Endothelial cell of umbilical vein (primary cell): ENCODE measurements at regions of chrX and their contacts with region 1.

Region 1: GRCh38 chrX:132092439-132093065 is 35.3 kb downstream of the FRMD7 start:
- DNase-seq: peak; percentile 68
- H3K4me3 ChIP-seq: no peak overlapping the region
- H3K27ac ChIP-seq: no peak overlapping the region
- H3K4me1 ChIP-seq: no peaks in the 10 kb centered on the region
- H3K27me3 ChIP-seq: no peaks in the 10 kb centered on the region
- CTCF ChIP-seq: peak; percentile 38 to 60
- POLR2A ChIP-seq: no peak

Region 2: DNA sequence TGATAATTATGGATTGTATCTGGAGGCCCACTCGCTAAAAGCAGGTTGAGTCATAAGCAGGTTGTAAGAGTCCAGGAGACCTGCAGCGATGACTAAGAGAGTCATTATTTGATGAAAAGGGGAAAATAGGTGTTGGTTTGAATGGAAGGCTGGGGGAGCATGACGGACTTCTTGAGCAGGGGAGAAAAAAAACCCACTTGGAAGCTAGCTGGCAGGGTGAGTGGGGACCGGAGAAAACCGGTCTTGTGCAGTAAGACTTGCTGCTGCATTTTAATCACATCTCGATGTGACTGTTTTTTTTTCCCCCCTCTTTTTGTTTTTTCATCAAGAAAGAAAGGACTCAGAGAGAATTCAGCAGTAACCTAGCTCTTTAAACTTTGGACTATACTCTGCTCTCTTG is 893.5 kb before region 1 on chrX:
- CTCF ChIA-PET with region 1: no interaction called
- POLR2A ChIA-PET with region 1: no interaction called
- dilution Hi-C with region 1: no loop called
- intact Hi-C with region 1: no loop called
- DNase-seq: no peak
- H3K4me3 ChIP-seq: no peak overlapping the region
- H3K27ac ChIP-seq: no peak overlapping the region
- H3K4me1 ChIP-seq: no peaks in the 10 kb centered on the region
- H3K27me3 ChIP-seq: no peaks in the 10 kb centered on the region
- CTCF ChIP-seq: no peak
- POLR2A ChIP-seq: no peak

Region 3: GRCh38 chrX:131841496-131842410 is 250.8 kb before region 1 on chrX:
- CTCF ChIA-PET with region 1: interaction called, 12 read pairs
- POLR2A ChIA-PET with region 1: no interaction called
- dilution Hi-C with region 1: no loop called
- intact Hi-C with region 1: no loop called
- DNase-seq: peak; percentile 19
- H3K4me3 ChIP-seq: no peak overlapping the region
- H3K27ac ChIP-seq: no peak overlapping the region
- H3K4me1 ChIP-seq: no peaks in the 10 kb centered on the region
- H3K27me3 ChIP-seq: no peaks in the 10 kb centered on the region
- CTCF ChIP-seq: peak; percentile 59 to 61
- POLR2A ChIP-seq: no peak

Region 4: GRCh38 chrX:132071260-132071659 is 21.3 kb before region 1 on chrX:
- CTCF ChIA-PET with region 1: interaction called, 19 read pairs
- POLR2A ChIA-PET with region 1: no interaction called
- dilution Hi-C with region 1: no loop called
- intact Hi-C with region 1: no loop called
- DNase-seq: peak; percentile 31
- H3K4me3 ChIP-seq: no peak overlapping the region
- H3K27ac ChIP-seq: no peak overlapping the region
- H3K4me1 ChIP-seq: no peaks in the 10 kb centered on the region
- H3K27me3 ChIP-seq: no peaks in the 10 kb centered on the region
- CTCF ChIP-seq: no peak
- POLR2A ChIP-seq: no peak

Region 5: GRCh38 chrX:132206259-132206658 is 113.7 kb after region 1 on chrX:
- CTCF ChIA-PET with region 1: interaction called, 11 read pairs
- POLR2A ChIA-PET with region 1: no interaction called
- dilution Hi-C with region 1: no loop called
- intact Hi-C with region 1: no loop called
- DNase-seq: peak; percentile 20
- H3K4me3 ChIP-seq: no peak overlapping the region
- H3K27ac ChIP-seq: no peak overlapping the region
- H3K4me1 ChIP-seq: peaks cover 5% of the 10 kb centered on the region
- H3K27me3 ChIP-seq: no peaks in the 10 kb centered on the region
- CTCF ChIP-seq: no peak
- POLR2A ChIP-seq: no peak

Region 6: GRCh38 chrX:132333351-132333750 is 240.8 kb after region 1 on chrX:
- CTCF ChIA-PET with region 1: no interaction called
- POLR2A ChIA-PET with region 1: no interaction called
- dilution Hi-C with region 1: no loop called
- intact Hi-C with region 1: no loop called
- DNase-seq: no peak
- H3K4me3 ChIP-seq: no peak overlapping the region
- H3K27ac ChIP-seq: no peak overlapping the region
- H3K4me1 ChIP-seq: no peaks in the 10 kb centered on the region
- H3K27me3 ChIP-seq: no peaks in the 10 kb centered on the region
- CTCF ChIP-seq: no peak
- POLR2A ChIP-seq: no peak

Region 7: GRCh38 chrX:132615391-132616131 is 523.0 kb after region 1 on chrX:
- CTCF ChIA-PET with region 1: interaction called, 11 read pairs
- POLR2A ChIA-PET with region 1: no interaction called
- dilution Hi-C with region 1: no loop called
- intact Hi-C with region 1: loop called (anchors 5 kb)
- DNase-seq: peak; percentile 34
- H3K4me3 ChIP-seq: no peak overlapping the region
- H3K27ac ChIP-seq: no peak overlapping the region
- H3K4me1 ChIP-seq: no peaks in the 10 kb centered on the region
- H3K27me3 ChIP-seq: no peaks in the 10 kb centered on the region
- CTCF ChIP-seq: peak; percentile 23 to 41
- POLR2A ChIP-seq: no peak